ENCODE measurements at regions of chr4 and their contacts with region 1.

Region 1: GRCh38 chr4:89894649-89895550 is at the start of gene MMRN1:
- DNase-seq: peak; percentile 22
- H3K4me3 ChIP-seq: no peak within 1 kb of the TSS
- H3K27ac ChIP-seq: no peak within 1 kb of the TSS
- H3K4me1 ChIP-seq: peaks cover 21% of the 10 kb centered on the region
- CTCF ChIP-seq: no peak
- total RNA-seq, gene MMRN1: not detected in 2 replicates

Region 2: GRCh38 chr4:89158884-89159503 is 735.9 kb before region 1 on chr4:
- CTCF ChIA-PET with region 1: no interaction called
- POLR2A ChIA-PET with region 1: interaction called, 3 read pairs
- intact Hi-C with region 1: loop called (anchors 5 kb)
- DNase-seq: peak; percentile 47
- H3K4me3 ChIP-seq: no peak overlapping the region
- H3K27ac ChIP-seq: no peak overlapping the region
- H3K4me1 ChIP-seq: no peaks in the 10 kb centered on the region
- CTCF ChIP-seq: peak; percentile 94

Region 3: DNA sequence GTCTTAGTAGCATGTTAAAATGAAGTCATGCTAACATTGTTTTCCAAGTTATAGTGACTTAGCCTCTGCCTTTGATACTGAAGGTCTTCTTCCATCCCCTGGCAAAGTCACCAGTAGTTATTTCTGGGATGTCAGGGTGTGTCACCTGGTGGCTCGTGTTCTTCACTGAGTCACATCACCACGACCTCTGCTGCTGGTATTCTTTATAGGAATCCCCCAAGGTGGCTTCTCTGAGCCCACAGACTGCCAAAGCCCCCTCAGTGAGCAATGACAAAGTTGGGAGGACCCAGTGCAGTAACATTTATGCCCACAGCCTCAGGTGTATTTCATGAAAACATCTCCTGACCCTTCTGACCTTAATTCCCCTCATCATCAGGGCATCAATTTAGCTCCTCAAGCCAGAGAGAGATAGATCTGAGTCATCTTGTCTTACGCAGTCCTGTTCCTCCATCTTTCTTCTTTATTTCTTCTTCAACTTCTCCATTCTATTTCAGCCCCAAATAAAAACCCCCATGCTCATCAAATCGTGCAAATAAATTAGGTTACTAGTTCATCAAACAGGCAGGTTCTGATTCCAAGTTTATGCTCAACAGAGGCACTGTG is 558.0 kb before region 1 on chr4:
- CTCF ChIA-PET with region 1: no interaction called
- POLR2A ChIA-PET with region 1: no interaction called
- intact Hi-C with region 1: no loop called
- DNase-seq: no peak
- H3K4me3 ChIP-seq: no peak overlapping the region
- H3K27ac ChIP-seq: no peak overlapping the region
- H3K4me1 ChIP-seq: no peaks in the 10 kb centered on the region
- CTCF ChIP-seq: no peak

Region 4: DNA sequence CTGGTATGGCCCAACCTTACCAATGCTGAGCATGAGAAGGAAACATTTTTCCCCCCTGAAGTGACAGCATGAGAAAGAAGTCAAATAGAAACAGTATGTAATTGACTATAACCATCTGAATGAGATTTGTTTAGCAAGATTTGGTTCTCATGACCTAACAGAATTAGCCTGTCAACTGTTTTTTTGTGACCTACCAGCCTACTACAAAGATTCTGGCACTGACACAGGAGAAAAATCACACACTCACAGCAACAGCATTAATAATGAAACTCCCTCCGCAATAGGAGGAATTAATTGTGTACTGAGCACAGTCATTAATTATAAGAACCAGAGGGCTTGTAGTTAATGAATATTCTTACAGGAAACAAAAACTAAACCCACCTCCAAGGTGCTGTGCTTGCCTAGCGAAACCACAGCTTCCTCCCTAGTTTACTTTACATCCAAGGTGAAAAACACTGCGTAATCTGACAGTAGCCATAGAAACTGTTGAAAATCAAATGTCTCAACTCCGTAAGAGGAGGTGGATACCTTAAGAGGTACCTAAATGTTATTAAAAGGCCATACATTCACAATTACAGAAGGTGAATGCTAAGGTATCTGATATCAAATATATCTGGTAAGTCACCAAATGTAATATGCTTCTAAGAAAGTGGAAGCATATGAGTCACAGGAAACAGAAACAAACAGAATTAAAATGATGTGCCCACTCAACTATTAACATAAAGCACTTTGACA is 34.7 kb after region 1 on chr4:
- CTCF ChIA-PET with region 1: no interaction called
- POLR2A ChIA-PET with region 1: no interaction called
- intact Hi-C with region 1: no loop called
- DNase-seq: no peak
- H3K4me3 ChIP-seq: no peak overlapping the region
- H3K27ac ChIP-seq: no peak overlapping the region
- H3K4me1 ChIP-seq: no peaks in the 10 kb centered on the region
- CTCF ChIP-seq: no peak